ENCODE measurements at regions of chr6 and their contacts with region 1.

Region 1: GRCh38 chr6:37029249-37029971 is 24.0 kb downstream of the FGD2 start:
- DNase-seq: peak; percentile 86
- H3K4me3 ChIP-seq: no peak overlapping the region; a peak in 1 of 4 replicates
- H3K27ac ChIP-seq: no peak overlapping the region
- H3K4me1 ChIP-seq: peaks cover 0 to 5% of the 10 kb centered on the region in 2 experiments; a peak in 2 of 4 replicates
- H3K27me3 ChIP-seq: no peaks in the 10 kb centered on the region
- CTCF ChIP-seq: peak; percentile 71
- EP300 ChIP-seq: no peak
- RAD21 ChIP-seq: peak; percentile 86

Region 2: DNA sequence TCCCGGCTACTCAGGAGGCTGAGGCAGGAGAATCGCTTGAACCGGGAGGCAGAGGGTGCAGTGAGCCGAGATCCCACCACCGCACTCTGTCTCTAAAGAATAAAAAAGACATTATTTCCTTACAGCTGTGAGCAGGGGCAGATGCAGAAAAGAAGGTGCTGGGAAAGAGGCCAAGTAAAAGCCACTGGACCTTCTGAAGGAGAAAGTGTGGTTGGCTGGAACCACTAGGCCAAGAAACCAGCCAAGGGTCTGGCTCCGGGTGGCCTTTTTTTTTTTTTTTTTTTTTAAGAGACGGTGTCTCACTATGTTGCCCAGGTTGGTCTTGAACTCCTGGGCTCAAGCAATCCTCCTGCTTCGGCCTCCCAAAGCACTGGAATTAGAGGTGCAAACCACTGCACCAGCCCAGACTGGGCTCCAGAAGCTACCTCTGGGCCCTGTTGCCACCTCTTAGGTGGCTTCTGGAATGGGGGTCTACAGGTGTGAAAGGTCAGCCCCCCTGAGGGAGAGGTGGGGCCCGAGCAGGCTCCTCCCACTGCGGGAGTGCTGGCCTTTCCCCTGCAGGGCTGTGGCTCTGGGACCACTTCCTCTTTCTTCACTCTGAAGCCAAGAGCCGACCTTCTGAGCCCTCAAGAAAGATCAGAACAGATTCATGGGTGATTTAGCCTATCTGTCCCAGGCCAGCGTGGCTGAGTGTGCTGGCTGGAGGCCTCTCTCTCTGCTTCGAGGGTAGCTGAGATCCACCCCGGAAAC is 24.2 kb before region 1 on chr6 and contains the start of gene FGD2:
- CTCF ChIA-PET with region 1: interaction called, 14 read pairs
- POLR2A ChIA-PET with region 1: no interaction called
- DNase-seq: no peak
- H3K4me3 ChIP-seq: no peak within 1 kb of the TSS
- H3K27ac ChIP-seq: no peak within 1 kb of the TSS
- H3K4me1 ChIP-seq: no peaks in the 10 kb centered on the region; a peak in 1 of 4 replicates
- H3K27me3 ChIP-seq: no peaks in the 10 kb centered on the region; the same call in 1 of the 2 replicates
- CTCF ChIP-seq: no peak
- EP300 ChIP-seq: no peak
- RAD21 ChIP-seq: no peak
- polyA plus RNA-seq, gene FGD2: not detected in 2 replicates

Region 3: GRCh38 chr6:37131104-37131959 is 101.9 kb after region 1 on chr6:
- CTCF ChIA-PET with region 1: interaction called, 12 read pairs
- POLR2A ChIA-PET with region 1: no interaction called
- DNase-seq: peak; percentile 85
- H3K4me3 ChIP-seq: no peak overlapping the region
- H3K27ac ChIP-seq: peak overlapping the region in 1 of 2 experiments; percentile 72; a peak in 2 of 4 replicates
- H3K4me1 ChIP-seq: peaks cover 18 to 30% of the 10 kb centered on the region in 2 experiments; a peak in 3 of 4 replicates
- H3K27me3 ChIP-seq: no peaks in the 10 kb centered on the region
- CTCF ChIP-seq: no peak
- EP300 ChIP-seq: no peak; a peak in 1 of 4 replicates
- RAD21 ChIP-seq: peak; percentile 60

Region 4: DNA sequence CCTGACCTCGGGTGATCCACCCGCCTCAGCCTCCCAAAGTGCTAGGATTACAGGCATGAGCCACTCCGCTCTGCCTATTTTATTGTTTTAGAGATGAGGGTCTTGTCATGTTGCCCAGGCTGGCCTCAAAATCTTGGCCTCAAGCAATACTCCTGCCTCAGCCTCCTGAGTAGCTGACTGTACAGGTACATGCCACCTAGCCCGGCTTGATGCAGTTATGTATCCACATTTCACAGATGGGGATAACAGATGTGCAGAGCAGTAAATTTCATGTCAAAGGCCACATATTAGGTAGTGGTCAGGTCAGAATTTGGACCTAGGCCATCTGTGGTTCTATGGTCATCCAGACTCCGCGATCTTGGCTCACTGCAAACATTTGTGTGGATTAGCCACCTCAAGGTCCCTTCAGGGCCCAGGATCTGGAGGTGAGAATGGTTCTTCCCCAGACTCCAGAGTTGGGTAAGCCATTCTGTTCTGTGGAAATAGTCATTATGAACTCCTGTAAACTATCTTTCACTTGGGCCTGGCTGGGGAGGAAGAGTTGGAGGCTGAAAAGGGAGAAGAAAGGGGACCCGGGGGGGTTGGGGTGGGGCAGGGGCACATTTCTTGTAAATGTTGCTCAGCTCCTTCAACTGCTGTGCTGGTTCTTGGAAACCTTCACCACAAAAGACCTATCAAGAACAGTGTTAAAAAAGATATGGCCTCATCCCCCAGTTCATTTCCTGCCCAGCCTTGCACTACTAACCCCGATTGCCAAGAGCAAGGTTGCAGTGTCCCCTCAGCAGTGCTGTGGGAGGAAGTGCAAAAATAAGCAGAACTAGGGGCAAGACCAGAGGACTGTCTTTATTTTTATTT is 153.6 kb after region 1 on chr6:
- CTCF ChIA-PET with region 1: interaction called, 418 read pairs
- POLR2A ChIA-PET with region 1: no interaction called
- DNase-seq: no peak
- H3K4me3 ChIP-seq: no peak overlapping the region
- H3K27ac ChIP-seq: no peak overlapping the region
- H3K4me1 ChIP-seq: no peaks in the 10 kb centered on the region
- H3K27me3 ChIP-seq: no peaks in the 10 kb centered on the region
- CTCF ChIP-seq: no peak
- EP300 ChIP-seq: no peak
- RAD21 ChIP-seq: no peak

Region 5: DNA sequence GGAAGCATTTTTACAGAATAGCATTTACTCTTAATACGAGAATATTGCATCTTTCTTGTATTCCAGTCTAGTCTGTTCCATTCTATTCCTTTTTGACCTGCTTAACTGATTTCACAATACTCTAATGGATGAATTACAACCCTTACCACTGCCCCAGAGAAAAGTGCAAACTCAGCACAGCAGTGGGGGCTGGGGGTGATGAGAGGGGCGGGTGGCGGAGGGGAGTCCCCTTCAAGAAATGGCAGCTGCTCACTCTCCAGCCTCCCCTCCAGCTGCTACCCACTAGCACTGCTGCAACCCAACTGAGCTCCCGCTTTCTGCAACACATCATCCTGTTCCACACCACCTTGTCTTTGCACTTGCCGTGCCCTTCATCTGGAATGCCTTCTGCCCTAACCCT is 170.7 kb after region 1 on chr6:
- CTCF ChIA-PET with region 1: interaction called, 431 read pairs
- POLR2A ChIA-PET with region 1: no interaction called
- DNase-seq: no peak
- H3K4me3 ChIP-seq: no peak overlapping the region
- H3K27ac ChIP-seq: no peak overlapping the region
- H3K4me1 ChIP-seq: no peaks in the 10 kb centered on the region
- H3K27me3 ChIP-seq: no peaks in the 10 kb centered on the region
- CTCF ChIP-seq: no peak
- EP300 ChIP-seq: no peak
- RAD21 ChIP-seq: no peak